Ascending aorta (tissue), 2 donors: ENCODE measurements at regions of chrX and their contacts with region 1.

Region 1: GRCh38 chrX:13432414-13433297 is 112.8 kb upstream of the ATXN3L start:
- DNase-seq: peak in 1 of 2 donors; percentile 70
- H3K4me3 ChIP-seq: no peak overlapping the region
- H3K27ac ChIP-seq: peak overlapping the region; percentile 44 to 60
- H3K4me1 ChIP-seq: peaks cover 0 to 10% of the 10 kb centered on the region in 2 donors
- H3K27me3 ChIP-seq: no peaks in the 10 kb centered on the region
- CTCF ChIP-seq: no peak

Region 2: GRCh38 chrX:13482746-13483145 is 50.1 kb after region 1 on chrX:
- intact Hi-C with region 1: loop called (anchors 5 kb)
- DNase-seq: no peak
- H3K4me3 ChIP-seq: no peak overlapping the region
- H3K27ac ChIP-seq: peak overlapping the region; percentile 62 to 65
- H3K4me1 ChIP-seq: peaks cover 0 to 2% of the 10 kb centered on the region in 2 donors
- H3K27me3 ChIP-seq: no peaks in the 10 kb centered on the region
- CTCF ChIP-seq: no peak

Region 3: DNA sequence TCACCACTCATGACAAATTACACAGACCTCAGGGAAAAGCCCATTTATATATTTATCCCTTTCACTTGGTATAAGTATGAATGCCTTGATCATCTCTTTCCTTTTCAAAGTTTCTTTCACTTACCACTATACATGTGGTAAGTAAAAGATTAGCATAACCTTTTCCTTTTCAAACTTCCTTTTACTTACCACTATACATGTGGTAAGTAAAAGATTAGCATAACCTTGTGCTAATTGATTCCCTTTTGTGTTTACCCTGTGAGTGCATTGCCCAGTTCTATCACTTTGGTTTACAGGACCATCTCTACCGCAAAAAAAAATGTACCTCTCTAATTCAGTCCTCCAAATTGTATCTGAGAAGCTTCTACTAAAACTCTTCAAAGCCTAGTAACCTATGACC is 187.6 kb after region 1 on chrX:
- intact Hi-C with region 1: no loop called
- DNase-seq: no peak
- H3K4me3 ChIP-seq: no peak overlapping the region
- H3K27ac ChIP-seq: no peak overlapping the region
- H3K4me1 ChIP-seq: no peaks in the 10 kb centered on the region
- H3K27me3 ChIP-seq: no peaks in the 10 kb centered on the region
- CTCF ChIP-seq: no peak